Posterior vena cava (tissue), 2 donors: ENCODE measurements at regions of chr11 and their contacts with region 1.

Region 1: DNA sequence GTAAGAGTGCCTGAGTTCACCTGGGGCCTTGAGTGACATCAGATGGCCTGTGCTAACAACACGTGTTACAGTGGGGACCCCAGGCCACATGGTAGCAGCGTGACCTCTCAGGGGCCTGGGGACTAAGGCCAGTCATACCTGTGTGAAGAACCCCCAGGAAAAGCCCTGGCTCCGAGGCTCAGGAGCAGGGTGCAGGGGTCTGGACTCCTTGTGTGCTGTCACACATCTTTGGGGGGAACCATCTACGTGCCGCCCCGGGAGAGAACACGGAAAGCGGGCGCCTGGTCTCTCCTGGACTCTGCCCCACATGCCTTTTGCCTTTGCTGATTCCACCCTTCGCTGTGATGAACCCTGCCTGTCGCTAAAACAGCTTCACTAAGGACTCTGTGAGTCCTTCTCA is 48.7 kb downstream of the SHANK2 start:
- DNase-seq: peak; percentile 55

Region 2: GRCh38 chr11:71169328-71169727 is 34.4 kb before region 1 on chr11:
- intact Hi-C with region 1: loop called in 1 of 2 experiments (anchors 1 kb)
- DNase-seq: no peak